BJ (cell line): ENCODE measurements at regions of chr6 and their contacts with region 1.

Region 1: GRCh38 chr6:129251669-129252376 is 368.9 kb downstream of the LAMA2 start:
- DNase-seq: peak; percentile 11
- H3K4me3 ChIP-seq: no peak overlapping the region
- H3K27me3 ChIP-seq: no peaks in the 10 kb centered on the region
- CTCF ChIP-seq: peak; percentile 81

Region 2: GRCh38 chr6:128807577-128807976 is 444.2 kb before region 1 on chr6:
- CTCF ChIA-PET with region 1: interaction called, 17 read pairs
- POLR2A ChIA-PET with region 1: no interaction called
- DNase-seq: no peak
- H3K4me3 ChIP-seq: no peak overlapping the region
- H3K27me3 ChIP-seq: no peaks in the 10 kb centered on the region
- CTCF ChIP-seq: peak; percentile 60

Region 3: GRCh38 chr6:129329678-129330077 is 77.9 kb after region 1 on chr6:
- CTCF ChIA-PET with region 1: no interaction called
- POLR2A ChIA-PET with region 1: no interaction called
- DNase-seq: no peak
- H3K4me3 ChIP-seq: no peak overlapping the region
- H3K27me3 ChIP-seq: no peaks in the 10 kb centered on the region; the same call in 1 of the 2 replicates
- CTCF ChIP-seq: no peak

Region 4: GRCh38 chr6:129370268-129370916 is 118.6 kb after region 1 on chr6:
- CTCF ChIA-PET with region 1: interaction called, 10 read pairs
- POLR2A ChIA-PET with region 1: no interaction called
- DNase-seq: no peak
- H3K4me3 ChIP-seq: no peak overlapping the region
- H3K27me3 ChIP-seq: no peaks in the 10 kb centered on the region
- CTCF ChIP-seq: peak; percentile 61